Motor neuron (in vitro differentiated cells): ENCODE measurements at regions of chr5 and their contacts with region 1.

Region 1: GRCh38 chr5:144142139-144142823 is 28.2 kb downstream of the YIPF5 start:
- ATAC-seq: peak; percentile 53 to 99 (median 87)
- H3K4me3 ChIP-seq: no peak overlapping the region
- H3K27ac ChIP-seq: no peak overlapping the region
- H3K4me1 ChIP-seq: peaks cover 9% of the 10 kb centered on the region in 2 donors

Region 2: GRCh38 chr5:142922223-142922952 is 1219.9 kb before region 1 on chr5:
- in situ Hi-C with region 1: loop called in 1 of 9 experiments (anchors 25 kb)
- ATAC-seq: peak in 7 of 8 experiments; percentile 36 to 72 (median 61)
- H3K4me3 ChIP-seq: no peak overlapping the region
- H3K27ac ChIP-seq: no peak overlapping the region
- H3K4me1 ChIP-seq: no peaks in the 10 kb centered on the region

Region 3: DNA sequence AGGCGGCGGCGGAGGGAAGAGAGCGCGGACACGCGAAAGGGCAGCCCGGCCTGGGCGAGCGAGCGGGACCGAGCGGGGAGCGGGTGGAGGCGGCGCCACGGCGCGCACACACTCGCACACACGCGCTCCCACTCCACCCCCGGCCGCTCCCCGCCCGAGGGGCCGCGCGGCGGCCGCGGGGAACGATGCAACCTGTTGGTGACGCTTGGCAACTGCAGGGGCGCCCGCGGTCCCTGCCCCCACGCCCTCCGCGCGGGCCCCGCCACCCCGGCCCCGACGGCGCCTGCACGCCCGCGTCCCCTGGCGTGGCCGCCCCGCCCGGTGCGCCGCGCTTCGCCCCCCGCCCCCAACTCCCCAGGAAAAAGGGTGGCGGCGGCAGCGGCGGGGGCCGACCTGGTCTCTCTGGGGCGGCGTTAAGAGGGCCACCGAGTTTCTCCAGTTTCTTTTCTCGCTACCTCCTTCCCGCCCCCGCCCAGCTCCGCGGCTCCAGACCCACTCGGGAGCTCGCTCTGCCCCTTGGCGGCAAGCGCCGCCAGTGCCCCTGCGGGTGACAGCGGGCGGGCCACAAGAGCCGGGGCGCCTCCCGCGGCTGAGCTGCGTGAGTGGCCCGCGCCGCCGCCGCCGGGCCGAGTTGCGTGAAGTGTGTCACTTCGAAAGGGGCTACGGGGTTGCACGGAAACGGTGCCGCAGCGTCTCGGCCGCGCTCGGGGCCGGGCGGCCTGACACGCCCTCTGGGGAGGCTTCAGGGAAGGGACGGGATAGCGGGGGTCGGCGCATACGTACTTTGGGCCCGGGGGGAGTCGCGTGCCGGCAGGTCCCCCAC is 738.5 kb before region 1 on chr5 and contains the start of gene NR3C1:
- in situ Hi-C with region 1: loop called in 1 of 9 experiments (anchors 25 kb)
- ATAC-seq: peak; percentile 55 to 78 (median 75)
- H3K4me3 ChIP-seq: peak within 1 kb of the TSS; percentile 54 to 64 (median 61)
- H3K27ac ChIP-seq: peak within 1 kb of the TSS; percentile 18 to 99
- H3K4me1 ChIP-seq: peaks cover 6 to 12% of the 10 kb centered on the region in 2 donors
- total RNA-seq, gene NR3C1: 5.4 to 65.9 (median 20.8) TPM

Region 4: DNA sequence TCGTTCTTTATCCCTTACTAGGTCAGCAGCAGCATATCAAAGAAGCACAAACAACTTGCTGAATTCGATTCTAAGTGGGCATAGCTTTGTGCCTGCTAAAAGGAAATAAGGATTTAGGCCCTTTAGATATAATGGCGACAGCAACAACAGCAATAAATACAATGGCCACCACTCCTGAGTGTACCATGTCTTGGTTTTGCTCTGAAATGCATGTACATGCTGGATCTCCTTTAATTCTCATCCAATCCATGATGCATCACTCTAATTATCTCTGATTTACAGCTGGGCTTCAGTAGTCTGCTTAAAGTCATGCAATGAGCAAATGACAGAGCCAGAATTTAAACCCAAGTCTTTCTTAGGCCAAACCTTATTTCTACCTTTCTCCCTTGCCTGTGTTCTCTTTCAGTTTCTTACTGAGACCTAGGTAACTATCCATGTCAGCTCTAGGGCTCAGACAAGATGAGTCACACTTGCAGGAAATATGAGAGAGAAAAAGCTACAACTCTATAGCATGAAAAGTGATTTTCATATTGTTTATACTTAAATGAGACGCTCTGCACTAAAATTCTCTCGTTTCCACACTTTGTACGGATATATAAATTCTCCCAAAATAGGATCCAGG is 218.5 kb before region 1 on chr5:
- in situ Hi-C with region 1: no loop called
- ATAC-seq: peak in 5 of 8 experiments; percentile 17 to 68 (median 45)
- H3K4me3 ChIP-seq: no peak overlapping the region
- H3K27ac ChIP-seq: no peak overlapping the region
- H3K4me1 ChIP-seq: no peaks in the 10 kb centered on the region

Region 5: GRCh38 chr5:143985832-143986485 is 156.3 kb before region 1 on chr5:
- in situ Hi-C with region 1: loop called in 1 of 9 experiments (anchors 25 kb)
- ATAC-seq: peak in 5 of 8 experiments; percentile 28 to 84 (median 65)
- H3K4me3 ChIP-seq: no peak overlapping the region
- H3K27ac ChIP-seq: no peak overlapping the region
- H3K4me1 ChIP-seq: peaks cover 7 to 14% of the 10 kb centered on the region in 2 donors